ENCODE measurements at regions of chr13 and their contacts with region 1.

Region 1: DNA sequence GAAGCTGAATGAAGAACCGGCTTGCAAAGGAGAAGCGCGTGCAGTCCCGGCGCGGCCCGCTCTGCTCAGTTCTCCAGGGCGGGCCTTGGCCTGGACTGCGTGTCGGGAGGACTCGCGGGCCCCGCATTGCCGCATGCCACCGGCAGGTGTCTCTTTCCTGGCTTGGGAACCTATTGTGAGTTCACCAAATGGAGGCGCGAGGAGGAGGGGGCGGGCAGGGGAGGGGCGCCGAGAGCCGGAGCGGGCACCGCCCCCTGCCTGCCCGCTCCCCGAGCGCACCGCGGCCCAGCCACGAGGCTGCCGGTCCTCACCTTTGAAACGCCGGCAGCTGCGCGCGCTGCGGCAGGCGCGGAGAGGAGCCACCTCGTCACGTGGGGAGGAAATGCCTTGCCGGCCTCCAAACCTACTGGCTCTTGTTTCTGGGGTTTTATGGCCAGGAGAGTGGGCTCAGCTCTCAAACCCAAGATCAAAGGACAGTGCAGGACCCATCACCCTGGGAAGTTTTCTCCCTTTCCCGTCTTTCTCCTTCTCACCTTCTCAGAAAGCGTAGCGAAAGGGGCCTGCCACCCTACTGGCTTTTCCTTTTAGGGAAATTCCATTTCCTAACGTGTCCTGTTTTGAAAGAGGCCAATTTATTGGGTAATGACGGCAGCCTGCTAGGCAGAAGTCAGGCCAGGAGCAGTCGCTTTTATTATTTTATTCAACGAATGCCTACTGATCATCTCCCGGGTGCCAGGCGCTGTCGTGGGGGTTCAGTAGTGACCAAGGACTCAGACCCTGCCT is 13.8 kb upstream of the UBE2L5 start:
- DNase-seq: peak; percentile 96
- H3K4me3 Mint-ChIP-seq: peak overlapping the region; percentile 49
- H3K27ac Mint-ChIP-seq: no peak overlapping the region
- H3K4me1 Mint-ChIP-seq: peaks cover 10% of the 10 kb centered on the region
- H3K27me3 Mint-ChIP-seq: no peaks in the 10 kb centered on the region

Region 2: GRCh38 chr13:30306762-30307193 is 101.7 kb before region 1 on chr13:
- CTCF ChIA-PET with region 1: no interaction called
- intact Hi-C with region 1: loop called (anchors 1 kb)
- DNase-seq: peak; percentile 94
- H3K4me3 Mint-ChIP-seq: peak overlapping the region; percentile 83
- H3K27ac Mint-ChIP-seq: peak overlapping the region; percentile 76
- H3K4me1 Mint-ChIP-seq: peaks cover 14% of the 10 kb centered on the region
- H3K27me3 Mint-ChIP-seq: no peaks in the 10 kb centered on the region

Region 3: DNA sequence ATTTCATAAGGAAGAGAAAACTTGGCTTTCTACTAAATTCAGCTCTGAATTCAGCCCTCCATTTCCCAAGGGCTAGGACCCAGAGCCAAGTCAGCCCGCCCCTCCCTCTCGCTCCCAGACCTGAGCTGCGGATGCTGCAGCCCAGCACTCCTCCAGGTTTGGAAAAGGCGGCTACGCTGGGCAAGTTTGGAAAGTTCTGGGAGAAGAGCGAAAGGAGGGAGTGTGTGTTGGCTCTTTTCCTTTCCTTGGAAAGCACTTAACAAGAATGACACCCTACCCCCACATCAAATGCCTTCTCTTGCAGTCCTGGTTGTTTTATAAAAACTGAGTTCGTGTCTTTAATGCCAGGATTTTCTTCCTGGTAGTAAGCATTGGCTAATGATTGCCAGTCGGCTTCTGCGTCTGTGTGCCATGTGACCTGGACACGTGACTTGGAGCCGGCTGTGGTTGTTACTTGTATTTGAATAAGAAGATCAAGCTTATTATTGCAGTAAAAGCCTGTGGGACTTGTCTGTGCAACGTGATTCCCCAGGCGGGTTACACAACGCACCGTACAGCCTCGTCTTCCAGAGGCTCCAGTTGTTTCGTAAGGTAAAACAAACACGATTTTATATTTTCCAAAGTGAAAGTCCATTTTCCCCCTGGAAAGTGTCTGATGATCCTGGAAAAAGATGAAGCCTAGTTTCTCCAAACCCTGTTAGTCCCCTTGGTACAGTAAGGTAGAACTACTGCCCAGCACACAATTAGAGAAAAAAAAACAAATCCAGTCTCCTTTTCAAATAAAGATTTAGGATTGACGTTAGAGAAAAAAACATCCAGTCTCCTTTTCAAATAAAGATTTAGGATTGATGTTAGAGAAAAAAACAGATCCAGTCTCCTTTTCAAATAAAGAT is 13.1 kb before region 1 on chr13:
- CTCF ChIA-PET with region 1: interaction called, 6 read pairs
- intact Hi-C with region 1: loop called (anchors 1 kb)
- DNase-seq: peak; percentile 88
- H3K4me3 Mint-ChIP-seq: peak overlapping the region; percentile 85
- H3K27ac Mint-ChIP-seq: peak overlapping the region; percentile 94
- H3K4me1 Mint-ChIP-seq: peaks cover 23% of the 10 kb centered on the region
- H3K27me3 Mint-ChIP-seq: no peaks in the 10 kb centered on the region

Region 4: DNA sequence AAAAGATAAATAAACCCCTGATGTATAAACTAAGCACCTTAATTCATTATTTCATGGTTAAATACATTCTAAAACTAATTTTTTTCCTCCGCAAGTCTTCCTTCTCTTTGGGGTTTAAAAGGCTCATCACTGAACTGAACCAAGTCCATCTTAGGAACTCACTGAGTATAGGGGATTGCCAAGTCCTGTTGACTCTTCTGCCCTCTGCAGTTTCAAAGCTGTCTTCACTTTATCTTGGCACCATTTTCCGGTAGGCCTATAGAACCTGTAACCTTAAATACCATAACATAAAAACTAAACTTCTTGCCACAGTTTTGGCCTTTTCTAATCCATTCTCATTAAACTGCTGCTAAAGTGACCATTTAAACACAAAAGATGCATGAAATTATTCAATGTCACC is 142.7 kb after region 1 on chr13:
- CTCF ChIA-PET with region 1: no interaction called
- intact Hi-C with region 1: loop called (anchors 2 kb)
- DNase-seq: peak; percentile 30
- H3K4me3 Mint-ChIP-seq: no peak overlapping the region
- H3K27ac Mint-ChIP-seq: no peak overlapping the region
- H3K4me1 Mint-ChIP-seq: peaks cover 2% of the 10 kb centered on the region
- H3K27me3 Mint-ChIP-seq: no peaks in the 10 kb centered on the region

Region 5: GRCh38 chr13:30802953-30803478 is 394.5 kb after region 1 on chr13:
- CTCF ChIA-PET with region 1: no interaction called
- intact Hi-C with region 1: loop called (anchors 1 kb)
- DNase-seq: peak; percentile 88
- H3K4me3 Mint-ChIP-seq: peak overlapping the region; percentile 38
- H3K27ac Mint-ChIP-seq: no peak overlapping the region
- H3K4me1 Mint-ChIP-seq: peaks cover 5% of the 10 kb centered on the region
- H3K27me3 Mint-ChIP-seq: no peaks in the 10 kb centered on the region

Measured in activated naive CD4-positive, alpha-beta T cell treated with anti-CD3 and anti-CD28 coated beads for 36 hours (primary cell).